ENCODE measurements at regions of chr22 and their contacts with region 1.

Region 1: DNA sequence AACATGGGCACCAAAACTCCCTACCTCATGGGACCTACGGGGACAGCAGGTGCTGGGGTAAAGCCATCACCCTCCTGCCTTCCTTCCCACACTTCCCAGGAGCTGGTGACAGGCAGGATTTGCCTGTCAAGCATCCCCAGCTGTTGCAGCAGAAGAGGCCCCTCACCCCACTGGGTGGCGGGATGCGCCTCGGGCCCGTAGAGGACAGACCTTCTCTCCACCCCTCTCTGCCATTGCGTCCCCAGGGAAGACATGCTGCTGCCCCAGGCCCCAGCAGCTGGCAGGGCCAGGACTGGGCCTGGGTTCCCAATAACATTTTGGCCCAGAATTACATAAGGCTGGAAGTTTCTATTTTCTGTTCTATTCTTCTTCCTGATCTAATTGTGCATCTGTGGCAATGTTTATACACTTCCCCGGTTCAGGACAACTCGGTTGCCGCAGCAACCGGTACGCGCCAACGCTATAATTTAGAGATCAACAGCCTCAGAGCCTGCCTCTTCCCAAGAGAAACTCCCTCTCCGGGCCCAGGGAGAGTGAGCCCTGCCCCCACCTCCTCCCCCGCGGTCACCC is 25.4 kb downstream of the KCNJ4 start:
- DNase-seq: no peak
- H3K4me3 ChIP-seq: no peak overlapping the region
- H3K27ac ChIP-seq: no peak overlapping the region
- H3K4me1 ChIP-seq: no peaks in the 10 kb centered on the region
- H3K27me3 ChIP-seq: no peaks in the 10 kb centered on the region
- CTCF ChIP-seq: no peak

Region 2: GRCh38 chr22:38338772-38339379 is 90.7 kb before region 1 on chr22:
- CTCF ChIA-PET with region 1: no interaction called
- dilution Hi-C with region 1: no loop called
- in situ Hi-C with region 1: no loop called
- intact Hi-C with region 1: no loop called
- DNase-seq: no peak
- H3K4me3 ChIP-seq: no peak overlapping the region
- H3K27ac ChIP-seq: no peak overlapping the region
- H3K4me1 ChIP-seq: peaks cover 4% of the 10 kb centered on the region
- H3K27me3 ChIP-seq: no peaks in the 10 kb centered on the region
- CTCF ChIP-seq: no peak

Region 3: DNA sequence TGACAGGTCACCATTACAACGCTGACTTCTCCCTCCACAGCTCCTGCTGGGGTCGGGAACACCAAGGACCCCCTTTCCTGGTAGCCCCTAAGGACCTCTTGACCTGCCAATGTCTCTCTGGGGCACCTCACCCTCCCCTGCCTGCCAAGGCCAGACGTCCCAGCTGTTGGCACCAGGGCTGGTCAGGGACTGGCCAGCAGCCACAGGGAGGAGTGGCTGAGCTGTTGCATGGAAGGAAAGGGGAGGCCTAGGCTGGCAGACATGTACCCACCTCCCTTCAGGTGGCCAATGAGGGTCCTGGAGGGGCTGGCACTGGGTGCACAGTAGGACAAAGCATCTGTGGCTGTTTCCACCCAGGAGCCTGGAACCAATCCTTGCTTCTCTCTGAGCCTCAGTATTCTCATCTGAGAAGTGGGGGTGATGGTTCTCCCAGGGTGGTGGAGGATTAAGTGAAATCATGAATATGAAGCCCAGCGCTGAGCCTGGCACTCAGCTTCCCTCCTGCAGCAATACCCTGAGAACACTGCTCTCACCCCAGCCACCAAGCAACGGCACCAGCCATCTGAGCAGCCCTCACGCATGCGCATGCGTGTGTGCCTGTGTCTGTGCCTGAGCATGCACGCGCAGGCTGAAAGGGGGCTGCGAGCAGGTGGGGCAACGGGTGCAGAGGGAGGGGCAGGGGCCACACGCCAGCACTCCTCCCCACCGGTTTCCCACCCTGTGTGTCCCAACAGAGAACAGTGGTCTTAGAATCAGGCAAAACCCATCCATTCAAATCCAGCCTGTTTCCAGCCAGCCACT is 19.6 kb after region 1 on chr22:
- CTCF ChIA-PET with region 1: interaction called, 18 read pairs
- dilution Hi-C with region 1: no loop called
- in situ Hi-C with region 1: no loop called
- intact Hi-C with region 1: no loop called
- DNase-seq: no peak
- H3K4me3 ChIP-seq: no peak overlapping the region
- H3K27ac ChIP-seq: no peak overlapping the region
- H3K4me1 ChIP-seq: peaks cover 8% of the 10 kb centered on the region
- H3K27me3 ChIP-seq: peaks cover 2% of the 10 kb centered on the region
- CTCF ChIP-seq: no peak

Region 4: DNA sequence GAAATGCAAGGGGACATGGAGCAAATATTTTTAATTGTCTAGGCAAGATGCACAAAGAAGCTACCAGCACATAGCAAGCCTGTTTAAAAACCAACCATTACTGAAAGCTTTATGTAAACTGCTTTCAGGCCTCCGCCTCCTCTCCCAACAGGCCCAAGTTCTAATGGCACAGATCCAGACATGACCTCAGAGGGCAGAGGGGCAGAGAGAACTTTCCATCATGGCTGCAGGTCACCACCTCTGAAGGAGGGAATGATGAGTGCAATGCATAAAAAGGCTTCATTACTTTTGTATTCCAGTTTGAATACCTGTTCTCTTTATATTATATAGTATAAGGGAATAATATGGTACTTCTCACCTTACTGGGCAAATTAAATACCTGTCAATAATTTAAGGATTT is 61.3 kb after region 1 on chr22:
- CTCF ChIA-PET with region 1: no interaction called
- dilution Hi-C with region 1: loop called (anchors 5 kb)
- in situ Hi-C with region 1: no loop called
- intact Hi-C with region 1: no loop called
- DNase-seq: no peak
- H3K4me3 ChIP-seq: no peak overlapping the region
- H3K27ac ChIP-seq: no peak overlapping the region
- H3K4me1 ChIP-seq: no peaks in the 10 kb centered on the region
- H3K27me3 ChIP-seq: no peaks in the 10 kb centered on the region
- CTCF ChIP-seq: no peak